ENCODE measurements at regions of chr20 and their contacts with region 1.

Region 1: GRCh38 chr20:48689411-48689810 is 138.4 kb downstream of the PREX1 start:
- DNase-seq: no peak
- ATAC-seq: no peak
- H3K4me3 Mint-ChIP-seq: no peak overlapping the region
- H3K27ac Mint-ChIP-seq: no peak overlapping the region
- H3K4me1 Mint-ChIP-seq: peaks cover 2% of the 10 kb centered on the region
- H3K27me3 Mint-ChIP-seq: no peaks in the 10 kb centered on the region
- CTCF ChIP-seq: no peak

Region 2: DNA sequence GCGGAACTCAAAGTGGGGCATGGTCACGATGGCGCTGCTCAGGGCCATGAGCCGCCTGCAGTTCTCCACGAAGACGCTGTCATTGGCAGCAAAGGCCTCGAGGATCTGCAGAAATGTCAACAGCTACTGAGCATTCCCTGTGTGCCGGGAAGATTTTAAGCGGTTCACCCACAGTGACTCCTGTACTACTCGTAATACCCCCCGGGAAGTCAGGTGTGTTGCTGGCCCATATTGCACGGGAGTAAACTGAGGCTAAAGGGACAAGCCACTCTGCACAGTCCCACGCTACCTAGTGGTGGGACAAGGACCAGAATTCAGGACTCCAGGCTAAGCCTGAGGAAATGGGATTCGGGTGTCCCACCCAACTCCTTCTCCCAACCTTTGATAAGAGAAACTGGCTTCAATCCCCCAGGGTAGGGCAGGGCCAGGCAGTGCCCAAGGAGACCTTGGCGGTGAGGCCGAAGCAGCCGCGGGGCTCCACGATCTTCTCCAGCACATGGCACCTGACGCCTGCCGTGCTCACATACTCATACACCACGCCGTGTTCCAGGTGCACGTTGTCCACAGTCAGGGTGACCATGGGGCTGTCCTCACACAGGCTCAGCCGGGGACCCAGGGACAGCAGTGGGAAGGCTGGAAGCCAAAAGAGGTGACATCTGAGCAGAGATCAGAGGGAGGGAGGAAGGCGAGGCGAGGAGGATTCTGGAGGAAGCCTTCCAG is 38.3 kb before region 1 on chr20:
- CTCF ChIA-PET with region 1: no interaction called
- POLR2A ChIA-PET with region 1: no interaction called
- intact Hi-C with region 1: loop called (anchors 1 kb)
- DNase-seq: no peak
- ATAC-seq: no peak
- H3K4me3 Mint-ChIP-seq: no peak overlapping the region
- H3K27ac Mint-ChIP-seq: no peak overlapping the region
- H3K4me1 Mint-ChIP-seq: no peaks in the 10 kb centered on the region
- H3K27me3 Mint-ChIP-seq: no peaks in the 10 kb centered on the region
- CTCF ChIP-seq: no peak